Calu3 (cell line): ENCODE measurements at regions of chr20 and their contacts with region 1.

Region 1: GRCh38 chr20:63641792-63642544 is 11.3 kb downstream of the STMN3 start:
- DNase-seq: peak; percentile 99
- H3K4me3 Mint-ChIP-seq: peak overlapping the region; percentile 73
- H3K27ac Mint-ChIP-seq: peak overlapping the region; percentile 60
- H3K4me1 Mint-ChIP-seq: peaks cover 8% of the 10 kb centered on the region
- H3K27me3 Mint-ChIP-seq: no peaks in the 10 kb centered on the region
- CTCF ChIP-seq: peak; percentile 61

Region 2: DNA sequence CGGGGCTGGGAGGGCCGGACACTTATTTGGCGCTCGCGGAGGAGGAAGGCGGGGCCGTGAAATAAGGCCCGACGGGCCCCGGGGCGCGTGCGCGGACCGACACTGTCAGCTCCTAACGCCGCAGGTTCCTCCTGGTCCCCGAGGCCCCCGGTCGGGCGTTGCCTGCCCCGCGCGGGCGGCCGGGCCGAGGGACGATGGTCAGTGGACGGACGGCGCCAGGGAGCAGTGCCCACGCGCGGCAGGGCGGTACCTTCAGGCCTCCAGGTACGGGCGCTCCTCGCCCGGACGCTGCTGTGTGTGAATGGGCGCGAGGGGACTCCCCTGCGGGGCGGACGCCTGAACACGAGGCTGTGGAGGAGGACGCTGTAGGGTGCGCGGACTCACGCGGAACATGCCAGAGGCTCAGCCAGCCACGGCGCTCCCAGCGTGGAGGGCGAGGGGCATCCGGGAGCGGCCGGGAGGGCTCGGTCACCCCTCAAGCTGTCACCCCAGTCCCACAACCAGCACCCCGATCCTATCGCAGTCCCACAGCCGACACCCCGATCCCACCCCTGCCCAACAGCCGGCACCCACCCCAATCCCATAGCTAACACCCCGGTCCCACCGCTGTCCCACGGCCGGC is 14.7 kb before region 1 on chr20:
- CTCF ChIA-PET with region 1: interaction called, 17 read pairs
- intact Hi-C with region 1: no loop called
- DNase-seq: peak; percentile 99
- H3K4me3 Mint-ChIP-seq: peak overlapping the region; percentile 76
- H3K27ac Mint-ChIP-seq: peak overlapping the region; percentile 74
- H3K4me1 Mint-ChIP-seq: peaks cover 7% of the 10 kb centered on the region
- H3K27me3 Mint-ChIP-seq: no peaks in the 10 kb centered on the region
- CTCF ChIP-seq: no peak

Region 3: GRCh38 chr20:63657937-63658748 is 16.2 kb after region 1 on chr20 and contains the start of gene RTEL1:
- CTCF ChIA-PET with region 1: interaction called, 13 read pairs
- intact Hi-C with region 1: no loop called
- DNase-seq: peak; percentile 96
- H3K4me3 Mint-ChIP-seq: peak within 1 kb of the TSS; percentile 93
- H3K27ac Mint-ChIP-seq: peak within 1 kb of the TSS; percentile 73
- H3K4me1 Mint-ChIP-seq: peaks cover 35% of the 10 kb centered on the region
- H3K27me3 Mint-ChIP-seq: peaks cover 22% of the 10 kb centered on the region
- CTCF ChIP-seq: no peak
- total RNA-seq, gene RTEL1: 39.1 and 39.8 TPM in 2 replicates

Region 4: GRCh38 chr20:63673951-63674350 is 32.0 kb after region 1 on chr20:
- CTCF ChIA-PET with region 1: no interaction called
- intact Hi-C with region 1: no loop called
- DNase-seq: no peak
- H3K4me3 Mint-ChIP-seq: no peak overlapping the region
- H3K27ac Mint-ChIP-seq: no peak overlapping the region
- H3K4me1 Mint-ChIP-seq: no peaks in the 10 kb centered on the region
- H3K27me3 Mint-ChIP-seq: no peaks in the 10 kb centered on the region
- CTCF ChIP-seq: no peak

Region 5: GRCh38 chr20:63734946-63735858 is 93.2 kb after region 1 on chr20:
- CTCF ChIA-PET with region 1: no interaction called
- intact Hi-C with region 1: no loop called
- DNase-seq: no peak
- H3K4me3 Mint-ChIP-seq: no peak overlapping the region
- H3K27ac Mint-ChIP-seq: peak overlapping the region; percentile 19
- H3K4me1 Mint-ChIP-seq: no peaks in the 10 kb centered on the region
- H3K27me3 Mint-ChIP-seq: no peaks in the 10 kb centered on the region
- CTCF ChIP-seq: no peak